Activated CD4-positive, alpha-beta memory T cell treated with anti-CD3 and anti-CD28 coated beads for 36 hours (primary cell): ENCODE measurements at regions of chr17 and their contacts with region 1.

Region 1: GRCh38 chr17:68291844-68292695 is 775 bp downstream of the ARSG start:
- DNase-seq: peak; percentile 91
- H3K4me3 Mint-ChIP-seq: peak overlapping the region; percentile 82
- H3K27ac Mint-ChIP-seq: peak overlapping the region; percentile 88
- H3K4me1 Mint-ChIP-seq: peaks cover 63% of the 10 kb centered on the region
- H3K27me3 Mint-ChIP-seq: no peaks in the 10 kb centered on the region

Region 2: GRCh38 chr17:68255731-68256538 is 36.1 kb before region 1 on chr17:
- CTCF ChIA-PET with region 1: interaction called, 5 read pairs
- POLR2A ChIA-PET with region 1: interaction called, 10 read pairs
- intact Hi-C with region 1: no loop called
- DNase-seq: peak; percentile 50
- H3K4me3 Mint-ChIP-seq: peak overlapping the region; percentile 5
- H3K27ac Mint-ChIP-seq: peak overlapping the region; percentile 84
- H3K4me1 Mint-ChIP-seq: peaks cover 84% of the 10 kb centered on the region
- H3K27me3 Mint-ChIP-seq: no peaks in the 10 kb centered on the region

Region 3: GRCh38 chr17:68356520-68356919 is 64.5 kb after region 1 on chr17:
- CTCF ChIA-PET with region 1: interaction called, 3 read pairs
- POLR2A ChIA-PET with region 1: interaction called, 5 read pairs
- intact Hi-C with region 1: loop called (anchors 1 kb)
- DNase-seq: peak; percentile 84
- H3K4me3 Mint-ChIP-seq: peak overlapping the region; percentile 40
- H3K27ac Mint-ChIP-seq: peak overlapping the region; percentile 68
- H3K4me1 Mint-ChIP-seq: peaks cover 54% of the 10 kb centered on the region
- H3K27me3 Mint-ChIP-seq: no peaks in the 10 kb centered on the region